ENCODE measurements at regions of chr6 and their contacts with region 1.

Region 1: GRCh38 chr6:31877125-31877650 is 1.6 kb downstream of the SLC44A4 start:
- DNase-seq: peak; percentile 10
- H3K4me3 ChIP-seq: no peak overlapping the region
- H3K27ac ChIP-seq: no peak overlapping the region
- H3K4me1 ChIP-seq: no peaks in the 10 kb centered on the region
- H3K27me3 ChIP-seq: no peaks in the 10 kb centered on the region
- CTCF ChIP-seq: no peak
- EP300 ChIP-seq: no peak
- RAD21 ChIP-seq: no peak

Region 2: GRCh38 chr6:31851485-31851832 is 25.7 kb before region 1 on chr6:
- CTCF ChIA-PET with region 1: no interaction called
- POLR2A ChIA-PET with region 1: no interaction called
- DNase-seq: no peak
- H3K4me3 ChIP-seq: no peak overlapping the region
- H3K27ac ChIP-seq: no peak overlapping the region
- H3K4me1 ChIP-seq: no peaks in the 10 kb centered on the region
- H3K27me3 ChIP-seq: no peaks in the 10 kb centered on the region
- CTCF ChIP-seq: no peak
- EP300 ChIP-seq: no peak
- RAD21 ChIP-seq: no peak

Region 3: DNA sequence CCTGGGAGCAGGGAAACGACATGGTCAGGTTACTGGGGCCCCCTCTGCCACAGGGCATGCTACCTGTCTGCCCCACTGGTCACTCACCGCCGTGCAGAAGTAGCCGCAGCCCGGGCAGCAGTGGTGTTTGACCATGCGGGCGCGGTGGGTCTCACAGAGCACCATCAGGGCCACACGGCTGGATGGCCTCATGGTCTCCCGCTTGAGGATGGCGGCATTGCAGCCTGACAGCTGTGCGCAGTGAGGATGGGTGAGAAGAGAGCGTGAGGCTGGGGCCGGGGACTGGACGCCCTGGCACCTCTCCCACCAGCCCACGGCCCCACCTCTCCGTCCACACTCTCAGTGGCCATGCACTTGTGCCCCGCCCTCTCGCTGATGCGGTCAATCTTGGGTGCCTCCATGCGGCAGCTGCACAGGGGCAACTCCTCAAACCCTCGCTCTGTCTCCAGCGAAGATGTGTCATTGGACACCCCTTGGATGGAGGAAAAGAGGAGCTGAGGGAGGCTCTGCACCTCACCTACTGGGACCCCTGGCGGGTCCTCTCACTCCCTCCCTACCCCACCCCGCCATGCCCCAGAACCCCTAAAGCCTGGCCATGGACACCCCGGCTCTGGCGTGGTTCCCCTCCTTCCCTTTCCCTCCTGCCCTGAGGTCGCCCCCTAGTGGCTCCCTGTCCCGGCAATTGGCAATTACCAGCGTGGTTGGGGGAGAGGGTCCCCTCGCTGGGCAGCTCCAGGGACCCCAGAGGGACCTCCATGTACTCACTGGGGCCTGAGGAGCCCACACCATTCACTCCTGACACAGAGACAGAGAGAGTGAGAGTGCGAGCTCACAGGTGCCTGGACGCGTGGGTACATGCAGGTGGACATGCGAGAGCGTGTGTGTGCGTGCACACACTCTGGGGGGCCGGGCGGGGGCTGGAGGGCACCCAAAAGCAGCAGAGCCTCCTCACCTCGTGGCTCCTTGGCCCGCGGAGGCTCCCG is 11.4 kb after region 1 on chr6:
- CTCF ChIA-PET with region 1: interaction called, 16 read pairs
- POLR2A ChIA-PET with region 1: interaction called, 3 read pairs
- DNase-seq: peak; percentile 83
- H3K4me3 ChIP-seq: no peak overlapping the region
- H3K27ac ChIP-seq: no peak overlapping the region
- H3K4me1 ChIP-seq: no peaks in the 10 kb centered on the region
- H3K27me3 ChIP-seq: no peaks in the 10 kb centered on the region
- CTCF ChIP-seq: peak; percentile 85
- EP300 ChIP-seq: no peak
- RAD21 ChIP-seq: peak; percentile 30; the same call in 1 of the 2 replicates

Region 4: GRCh38 chr6:31922942-31923341 is 45.8 kb after region 1 on chr6:
- CTCF ChIA-PET with region 1: no interaction called
- POLR2A ChIA-PET with region 1: no interaction called
- DNase-seq: no peak
- H3K4me3 ChIP-seq: no peak overlapping the region
- H3K27ac ChIP-seq: no peak overlapping the region
- H3K4me1 ChIP-seq: no peaks in the 10 kb centered on the region
- H3K27me3 ChIP-seq: no peaks in the 10 kb centered on the region
- CTCF ChIP-seq: peak; percentile 23
- EP300 ChIP-seq: no peak
- RAD21 ChIP-seq: peak; percentile 21

Measured in SK-N-SH (cell line).